Mucosa of descending colon (tissue), 3 donors: ENCODE measurements at regions of chr1 and their contacts with region 1.

Region 1: DNA sequence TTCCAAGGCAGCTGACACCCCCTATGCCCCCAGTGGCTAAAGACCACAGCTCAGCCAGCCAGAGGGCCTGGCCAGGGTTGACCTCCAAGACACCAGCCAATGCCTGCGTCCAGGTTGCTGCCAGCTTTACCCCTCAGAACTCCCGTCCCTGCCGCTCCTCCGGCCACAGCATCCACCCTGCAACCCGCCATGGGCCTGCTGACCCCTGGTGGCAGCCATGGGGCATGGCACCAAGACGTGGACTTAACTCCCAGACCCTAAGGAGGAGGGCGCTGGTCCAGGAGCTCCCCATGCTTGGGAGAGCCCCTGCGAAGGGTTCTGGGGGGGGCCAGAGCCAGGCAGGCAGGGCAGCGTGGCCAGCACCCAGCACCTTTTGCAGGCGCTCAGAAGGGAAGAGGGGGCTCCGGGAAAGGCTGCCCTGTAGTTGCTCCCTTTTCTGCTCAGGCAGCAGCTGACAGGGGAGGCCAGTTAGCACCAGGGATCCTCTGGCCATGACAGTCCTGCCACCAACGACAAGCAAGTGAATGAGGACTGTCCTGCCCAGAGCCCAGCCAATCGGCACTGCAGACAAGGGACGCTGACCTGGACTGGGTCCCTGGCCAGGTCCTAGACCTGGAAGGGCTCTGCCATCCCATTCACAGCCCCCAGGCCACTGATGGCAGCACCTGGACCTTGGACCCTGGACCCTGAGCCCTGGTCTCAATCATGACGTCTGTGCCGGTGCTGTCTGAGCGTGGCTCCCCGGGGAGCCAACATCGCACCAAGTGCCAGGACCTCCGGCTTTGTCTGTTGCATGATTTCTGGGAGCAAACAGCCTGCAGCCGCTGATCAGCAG is 246.2 kb downstream of the NPHP4 start:
- DNase-seq: peak in 2 of 3 donors; percentile 67 to 75
- ATAC-seq: peak; percentile 86
- H3K4me3 ChIP-seq: no peak overlapping the region
- H3K4me1 ChIP-seq: no peaks in the 10 kb centered on the region
- CTCF ChIP-seq: peak; percentile 95

Region 2: DNA sequence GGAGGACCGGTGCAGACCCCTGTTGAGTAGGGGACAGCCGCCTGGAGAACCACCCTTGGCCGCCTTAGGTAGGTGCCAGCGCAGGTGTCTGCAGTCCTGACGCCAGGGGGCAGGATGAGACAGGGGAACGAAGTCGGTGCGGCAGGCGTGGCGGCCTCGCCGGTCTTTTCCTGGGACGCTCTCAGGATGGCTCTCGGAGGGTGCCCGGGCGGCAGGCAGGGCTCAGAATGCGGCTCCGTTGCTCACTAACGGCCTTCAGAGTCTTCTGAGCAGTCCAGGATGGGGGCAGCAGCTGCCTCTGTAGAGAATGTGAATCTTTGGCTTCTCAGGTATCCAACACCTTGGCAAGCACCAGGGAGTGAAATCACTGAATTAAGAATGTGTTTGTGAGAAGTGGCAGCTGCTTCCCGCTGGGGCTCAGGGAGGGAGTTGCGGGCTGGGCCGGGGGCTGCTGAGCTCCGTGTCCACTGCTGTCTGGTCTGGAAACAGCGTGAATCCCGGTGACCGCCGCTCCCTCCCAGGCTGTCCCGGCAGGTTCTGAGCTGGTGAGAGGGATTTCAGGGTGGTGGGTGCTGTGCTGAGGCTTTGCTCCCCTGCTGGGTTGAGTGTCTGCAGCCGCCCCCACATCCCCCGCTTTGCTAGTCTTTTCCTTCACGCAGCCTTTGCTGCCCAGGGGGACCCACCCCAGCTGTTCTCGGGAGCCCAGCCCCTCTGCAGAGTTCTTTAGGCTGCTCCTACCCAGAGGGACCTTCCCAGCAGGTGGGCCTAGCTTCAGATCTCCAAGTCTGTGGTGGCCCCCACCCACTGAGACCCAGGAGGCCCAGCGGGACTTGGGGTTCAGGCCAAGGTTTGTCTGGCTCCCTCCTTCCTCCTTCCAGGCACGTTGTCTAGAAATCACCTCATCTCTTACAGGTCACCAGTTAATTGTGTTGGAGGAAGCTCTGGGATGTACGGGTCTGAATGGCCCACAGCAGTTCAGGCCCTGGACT is 1834.8 kb before region 1 on chr1:
- intact Hi-C with region 1: loop called in 1 of 2 experiments (anchors 10 kb)
- DNase-seq: peak; percentile 77 to 85 (median 81)
- ATAC-seq: peak; percentile 89
- H3K4me3 ChIP-seq: no peak overlapping the region
- H3K4me1 ChIP-seq: peaks cover 6% of the 10 kb centered on the region
- CTCF ChIP-seq: peak; percentile 57

Region 3: DNA sequence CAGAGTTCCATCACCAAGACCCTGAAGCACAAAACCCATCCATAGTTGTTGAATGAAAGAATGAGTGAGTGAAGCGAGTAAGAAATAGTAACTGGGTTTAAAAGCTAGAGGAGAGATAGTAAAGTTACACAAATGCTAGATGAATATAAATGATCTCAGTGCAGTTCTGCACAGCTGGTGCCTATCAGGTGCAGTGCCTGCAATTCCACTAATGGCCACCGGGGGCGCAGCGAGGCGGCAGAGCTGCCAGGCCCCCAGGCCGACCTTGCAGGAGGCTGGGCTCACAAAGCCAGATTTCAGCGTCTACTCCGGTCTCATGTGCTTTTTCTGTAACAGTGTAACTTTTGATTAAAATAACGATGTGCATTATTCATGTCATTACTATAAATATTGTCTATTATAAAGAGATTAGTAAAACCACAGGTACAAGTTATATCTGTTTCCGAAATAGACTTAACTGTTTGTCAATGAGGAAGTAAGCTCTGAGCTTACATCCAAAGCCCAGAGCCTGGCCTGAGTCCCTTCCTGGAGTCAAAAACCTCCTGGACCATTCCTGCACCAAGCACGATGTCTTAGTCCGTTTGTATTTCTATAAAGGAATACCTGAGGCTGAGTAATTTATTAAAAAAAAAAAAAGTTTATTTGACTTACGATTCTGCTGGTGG is 231.3 kb before region 1 on chr1:
- intact Hi-C with region 1: loop called in 1 of 2 experiments (anchors 10 kb)
- DNase-seq: peak in 2 of 3 donors; percentile 78 to 80
- ATAC-seq: peak; percentile 81
- H3K4me3 ChIP-seq: no peak overlapping the region
- H3K4me1 ChIP-seq: peaks cover 11% of the 10 kb centered on the region
- CTCF ChIP-seq: peak; percentile 100